ENCODE measurements at regions of chr11 and their contacts with region 1.

Region 1: DNA sequence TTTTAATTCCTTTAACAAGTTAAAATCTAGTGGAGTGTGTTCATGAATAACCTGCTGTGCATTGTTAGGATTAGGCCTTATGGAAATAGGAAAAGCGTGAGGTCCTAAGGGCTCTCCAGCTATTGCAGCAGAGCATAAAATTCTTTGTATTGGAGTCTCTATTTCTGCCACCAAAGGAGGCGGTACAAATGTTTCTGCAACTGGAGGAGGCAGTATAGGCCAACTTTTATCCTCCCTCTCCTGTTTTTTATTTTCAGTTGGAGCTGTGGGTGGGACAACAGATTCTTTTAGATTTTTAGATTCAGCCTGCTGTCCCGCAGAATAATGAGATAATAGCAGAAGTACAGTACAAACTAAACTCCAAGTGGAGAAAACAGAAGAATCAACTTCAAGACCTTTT is 26.2 kb downstream of the OR10A6 start:
- DNase-seq: no peak
- H3K4me3 ChIP-seq: no peak overlapping the region
- CTCF ChIP-seq: peak; percentile 28

Region 2: DNA sequence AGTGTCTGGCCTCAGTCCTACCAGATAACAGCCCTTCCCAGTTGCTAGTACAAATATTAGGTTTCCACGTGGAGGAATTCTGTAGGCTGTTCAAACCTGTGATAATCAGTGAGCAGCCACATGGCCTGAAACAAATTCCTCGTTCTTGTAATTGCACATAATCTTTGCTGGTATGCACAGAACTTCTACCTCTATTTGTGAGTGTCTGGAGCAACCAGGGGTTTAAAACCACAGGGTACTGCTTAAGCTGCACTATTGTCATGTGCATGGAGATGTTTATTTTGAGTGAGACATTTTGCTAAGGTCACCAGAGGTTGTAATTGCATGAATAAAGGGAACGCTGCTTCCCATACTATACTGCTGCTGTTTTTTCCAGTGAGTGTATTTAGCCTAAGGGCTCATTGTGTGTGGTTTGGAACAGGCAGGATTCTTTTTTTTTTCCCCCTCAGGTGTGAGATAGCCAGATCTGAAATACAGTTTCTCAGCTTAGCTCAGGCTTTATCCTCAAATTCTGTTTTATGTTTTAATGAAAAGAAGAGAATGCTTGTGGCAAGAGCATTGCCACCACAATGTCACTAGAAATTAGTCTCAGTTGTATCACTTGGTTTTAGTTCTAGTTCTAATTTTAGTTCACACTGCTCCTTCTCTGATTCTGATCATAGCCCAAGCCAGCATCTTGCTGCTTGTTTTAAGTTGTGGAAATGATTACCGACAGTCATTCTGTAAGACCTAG is 292.1 kb before region 1 on chr11:
- CTCF ChIA-PET with region 1: no interaction called
- POLR2A ChIA-PET with region 1: no interaction called
- DNase-seq: no peak
- H3K4me3 ChIP-seq: no peak overlapping the region
- CTCF ChIP-seq: no peak

Region 3: DNA sequence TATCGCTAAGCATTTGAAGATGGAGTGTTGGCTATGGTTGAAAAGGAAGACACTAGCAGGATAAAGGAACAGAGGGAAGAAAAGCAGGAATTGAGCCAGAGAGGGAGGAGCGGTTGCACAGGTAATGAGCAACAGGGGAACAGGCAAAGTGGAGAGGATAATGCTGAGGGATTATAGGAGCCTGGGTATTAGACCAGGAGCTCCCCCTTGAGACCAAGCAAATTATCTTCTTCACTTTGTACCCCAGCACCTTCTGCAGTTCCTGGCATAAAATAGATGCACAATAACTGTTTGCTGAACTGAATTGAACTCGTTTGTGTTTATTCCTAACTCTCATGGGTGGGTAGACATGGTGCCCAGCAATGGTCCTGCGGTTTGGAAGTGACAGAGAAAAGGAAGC is 53.5 kb before region 1 on chr11:
- CTCF ChIA-PET with region 1: no interaction called
- POLR2A ChIA-PET with region 1: no interaction called
- DNase-seq: no peak
- H3K4me3 ChIP-seq: no peak overlapping the region
- CTCF ChIP-seq: no peak

Region 4: DNA sequence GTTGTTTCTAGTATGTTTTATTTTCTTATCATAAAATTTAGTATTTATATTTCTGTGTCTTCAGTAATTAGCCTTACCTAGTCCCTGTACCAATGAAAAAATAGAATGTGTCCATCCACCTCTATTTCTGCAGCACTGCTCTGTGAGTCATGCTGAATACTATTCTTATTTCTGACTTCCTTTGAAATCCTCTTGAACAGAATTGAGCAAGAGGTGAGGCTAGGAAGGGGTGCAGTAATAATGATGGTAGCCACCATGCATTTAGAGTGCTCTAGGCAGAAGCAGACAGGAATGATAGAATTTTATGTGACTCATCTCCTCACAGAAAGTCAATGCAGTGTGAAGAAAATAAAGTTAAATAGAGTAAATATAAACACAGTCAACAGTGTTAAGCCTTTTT is 33.9 kb before region 1 on chr11:
- CTCF ChIA-PET with region 1: no interaction called
- POLR2A ChIA-PET with region 1: no interaction called
- DNase-seq: no peak
- H3K4me3 ChIP-seq: no peak overlapping the region
- CTCF ChIP-seq: no peak

Region 5: GRCh38 chr11:7892840-7893254 is 12.1 kb before region 1 on chr11:
- CTCF ChIA-PET with region 1: interaction called, 119 read pairs
- POLR2A ChIA-PET with region 1: interaction called, 3 read pairs
- DNase-seq: peak; percentile 28
- H3K4me3 ChIP-seq: no peak overlapping the region
- CTCF ChIP-seq: peak; percentile 56

Region 6: DNA sequence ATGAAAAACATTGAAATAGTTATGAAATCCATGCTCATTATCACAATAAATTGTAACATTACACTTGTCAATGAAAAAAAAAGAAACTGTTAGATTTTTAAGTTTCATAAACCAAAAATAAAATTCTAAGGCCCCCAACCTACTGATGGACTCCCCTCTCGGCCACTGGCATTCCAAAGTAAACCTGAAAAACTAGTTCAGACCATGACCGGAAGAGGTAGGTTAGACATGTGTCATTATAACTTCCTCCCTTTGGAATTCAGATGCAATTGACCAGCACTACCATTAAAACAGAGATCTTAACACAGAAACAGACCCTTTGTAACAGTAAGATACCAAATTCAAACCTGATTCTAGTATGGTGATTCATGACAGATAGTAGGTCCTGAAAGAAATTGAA is 13.2 kb after region 1 on chr11:
- CTCF ChIA-PET with region 1: no interaction called
- POLR2A ChIA-PET with region 1: no interaction called
- DNase-seq: no peak
- H3K4me3 ChIP-seq: no peak overlapping the region
- CTCF ChIP-seq: no peak

Region 7: DNA sequence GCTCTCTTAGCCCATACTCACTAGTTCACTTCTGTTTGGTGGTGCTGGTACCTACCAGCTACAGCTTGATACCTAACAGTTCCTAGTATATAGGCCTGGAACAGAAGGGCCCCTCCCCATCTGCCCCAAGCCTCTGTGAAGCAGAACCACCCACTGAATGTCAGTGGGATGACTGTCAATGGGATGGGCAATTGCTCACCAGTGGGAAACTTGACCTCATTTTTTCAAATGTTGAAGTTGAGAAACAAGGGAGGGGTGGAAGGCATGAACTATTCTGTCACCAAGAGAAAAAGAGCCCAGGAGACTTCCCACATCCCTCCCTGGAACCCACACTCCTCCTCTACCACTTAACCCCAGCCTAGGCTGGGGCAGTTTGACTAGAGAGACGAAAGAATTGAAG is 60.5 kb after region 1 on chr11 and contains the start of gene NLRP10:
- CTCF ChIA-PET with region 1: interaction called, 22 read pairs
- POLR2A ChIA-PET with region 1: interaction called, 3 read pairs
- DNase-seq: peak; percentile 77
- H3K4me3 ChIP-seq: peak within 1 kb of the TSS; percentile 25
- CTCF ChIP-seq: no peak

Region 8: DNA sequence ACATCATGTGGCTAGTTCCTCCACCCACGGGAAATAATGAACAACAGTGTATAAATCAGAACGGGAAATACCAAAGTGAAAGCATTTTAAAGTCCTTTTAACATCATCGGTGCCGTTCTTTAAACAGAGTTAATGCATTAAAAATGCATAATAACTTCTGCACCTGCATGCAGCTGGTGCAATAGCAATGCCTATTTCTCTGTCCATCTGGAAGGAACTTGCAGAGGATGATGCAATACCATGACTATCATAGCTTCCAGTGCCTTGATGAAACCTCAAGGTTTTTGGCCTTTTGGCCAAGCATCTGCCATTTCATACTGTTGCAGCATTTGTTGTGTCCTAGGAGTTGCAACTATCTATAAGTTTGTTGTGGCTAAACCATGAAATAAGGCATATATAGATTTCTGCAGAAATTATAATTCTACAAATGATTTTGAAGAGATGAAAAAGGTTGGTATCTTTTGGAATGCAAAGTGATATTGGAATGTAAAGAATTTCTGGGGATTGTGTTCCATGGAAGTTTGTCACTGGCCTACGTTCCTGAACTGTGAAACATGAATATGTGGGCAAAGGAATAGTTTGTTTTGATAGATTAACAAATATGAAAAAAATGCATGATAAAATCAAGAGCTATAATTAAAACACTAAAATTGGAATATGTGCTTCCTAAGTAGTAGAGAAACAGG is 72.5 kb after region 1 on chr11:
- CTCF ChIA-PET with region 1: interaction called, 337 read pairs
- POLR2A ChIA-PET with region 1: no interaction called
- DNase-seq: peak; percentile 87
- H3K4me3 ChIP-seq: no peak overlapping the region
- CTCF ChIP-seq: no peak

Measured in AG04449 (cell line).